ENCODE measurements at regions of chr18 and their contacts with region 1.

Region 1: DNA sequence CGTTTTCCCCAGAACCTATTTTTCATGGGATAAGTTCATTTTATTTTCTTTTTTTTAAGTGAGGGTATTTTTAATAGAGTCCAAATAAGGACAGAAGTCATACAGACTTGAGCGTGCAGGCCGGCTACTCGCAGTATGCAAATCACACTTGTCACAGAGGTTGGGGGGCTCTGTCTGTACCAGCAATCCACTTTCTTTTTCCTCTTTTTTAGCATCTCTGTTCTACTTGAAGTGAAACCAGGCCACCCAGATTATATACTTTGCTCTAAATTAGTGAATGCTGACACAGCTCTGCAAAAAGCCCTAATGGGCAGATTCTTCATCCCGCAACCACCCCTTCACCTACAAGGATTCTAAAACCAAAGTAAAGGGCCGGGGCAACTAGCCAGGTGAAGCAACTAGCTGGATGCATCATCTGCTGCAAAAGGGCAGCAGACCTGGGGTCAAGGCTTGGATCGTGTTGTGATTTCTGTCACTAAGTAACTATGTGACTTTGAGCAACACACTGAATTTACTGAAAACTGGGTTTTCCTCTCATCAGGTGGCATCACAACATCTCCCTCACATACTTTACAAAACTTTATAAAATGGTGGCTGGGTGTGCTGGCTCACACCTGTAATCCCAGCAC is 18.4 kb downstream of the KDSR start:
- DNase-seq: no peak
- H3K4me3 ChIP-seq: no peak overlapping the region
- H3K27ac ChIP-seq: no peak overlapping the region
- H3K4me1 ChIP-seq: peaks cover 37% of the 10 kb centered on the region
- H3K27me3 ChIP-seq: no peaks in the 10 kb centered on the region
- CTCF ChIP-seq: no peak

Region 2: GRCh38 chr18:63395503-63395902 is 46.9 kb after region 1 on chr18:
- CTCF ChIA-PET with region 1: no interaction called
- POLR2A ChIA-PET with region 1: interaction called, 11 read pairs
- intact Hi-C with region 1: no loop called
- DNase-seq: no peak
- H3K4me3 ChIP-seq: no peak overlapping the region
- H3K27ac ChIP-seq: no peak overlapping the region
- H3K4me1 ChIP-seq: no peaks in the 10 kb centered on the region
- H3K27me3 ChIP-seq: no peaks in the 10 kb centered on the region
- CTCF ChIP-seq: no peak

Measured in A673 (cell line).